ENCODE measurements at regions of chr12 and their contacts with region 1.

Region 1: DNA sequence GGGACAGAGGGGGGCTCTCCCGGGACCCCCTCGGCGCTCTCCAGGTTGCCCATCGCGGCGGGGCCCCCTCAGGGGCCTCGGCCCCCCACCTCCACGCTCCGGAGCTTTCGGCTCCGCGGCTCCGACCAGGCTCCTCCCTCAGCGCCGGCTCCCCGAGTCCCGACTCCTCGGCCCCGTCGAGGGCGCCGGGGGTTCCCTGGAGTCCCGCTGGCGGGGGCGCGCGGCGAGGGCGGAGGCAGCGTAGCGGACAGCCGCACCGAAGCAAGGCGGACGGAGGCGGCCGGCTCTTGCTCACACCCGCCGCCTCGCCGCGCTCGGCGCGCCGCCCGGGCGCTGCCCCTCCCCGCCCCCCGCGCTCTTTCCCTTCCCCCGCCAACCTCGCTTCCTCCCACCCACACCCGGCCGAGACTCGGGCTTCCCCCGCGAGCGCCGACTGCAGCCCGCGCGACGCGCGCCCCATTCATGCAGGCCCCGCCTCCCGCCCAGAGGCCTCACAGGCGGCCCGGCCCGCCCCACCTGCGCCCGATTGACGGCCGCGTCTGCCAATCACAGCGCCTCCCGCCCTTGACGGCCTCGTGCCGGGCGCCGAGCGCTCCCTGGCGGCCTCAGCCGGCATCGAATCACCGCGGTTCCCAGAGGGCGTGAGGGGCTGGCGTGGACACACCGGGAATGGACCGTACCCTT is at the start of gene FMNL3:
- DNase-seq: peak; percentile 97
- ATAC-seq: peak; percentile 86
- H3K4me3 Mint-ChIP-seq: peak within 1 kb of the TSS; percentile 89
- H3K27ac Mint-ChIP-seq: no peak within 1 kb of the TSS
- H3K4me1 Mint-ChIP-seq: peaks cover 38% of the 10 kb centered on the region
- H3K27me3 Mint-ChIP-seq: peaks cover 45% of the 10 kb centered on the region
- CTCF ChIP-seq: peak; percentile 74
- total RNA-seq, gene FMNL3: 15.2 to 19.3 TPM (median 15.6 TPM) in 3 replicates

Region 2: DNA sequence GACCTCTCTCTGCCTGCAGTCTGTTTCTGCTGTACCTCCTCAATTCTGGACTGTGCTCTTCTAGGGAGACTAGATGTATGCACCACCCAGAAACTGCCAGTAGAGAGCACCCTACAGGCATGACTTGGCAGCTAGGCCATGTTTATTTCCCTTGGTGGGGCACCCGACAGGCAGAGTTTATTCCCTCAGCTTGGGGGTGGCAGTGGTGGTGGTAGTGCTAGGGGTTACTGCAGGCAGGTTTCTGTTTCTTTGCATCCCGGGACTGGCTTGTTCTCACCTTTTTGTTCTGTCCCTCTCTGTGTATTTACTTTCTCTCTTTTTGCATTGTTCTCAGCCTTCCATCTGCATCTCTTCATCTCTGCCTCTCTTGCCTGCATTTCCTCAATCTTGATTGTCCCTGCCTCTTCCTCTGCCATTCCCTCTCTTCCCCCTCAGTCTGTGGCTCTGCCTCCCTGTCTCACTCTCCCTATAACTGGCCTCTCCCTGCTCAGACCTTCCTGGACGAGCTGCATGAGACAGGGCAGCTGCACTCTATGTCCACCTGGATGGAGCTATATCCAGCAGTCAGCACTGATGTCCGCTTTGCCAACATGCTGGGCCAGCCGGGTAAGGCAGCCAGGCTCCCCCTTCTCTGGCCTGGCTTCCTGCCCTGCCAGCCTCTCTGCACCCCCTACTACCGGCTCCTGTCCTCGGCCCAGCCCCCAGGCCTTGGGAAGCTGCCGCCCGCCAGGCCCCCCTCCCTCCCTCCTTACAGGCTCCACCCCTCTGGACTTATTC is 70.1 kb before region 1 on chr12:
- CTCF ChIA-PET with region 1: interaction called, 33 read pairs
- POLR2A ChIA-PET with region 1: interaction called, 3 read pairs
- DNase-seq: peak; percentile 63
- ATAC-seq: peak; percentile 86
- H3K4me3 Mint-ChIP-seq: peak overlapping the region; percentile 15; the same call in 1 of the 2 replicates
- H3K27ac Mint-ChIP-seq: peak overlapping the region; percentile 96
- H3K4me1 Mint-ChIP-seq: peaks cover 21% of the 10 kb centered on the region
- H3K27me3 Mint-ChIP-seq: no peaks in the 10 kb centered on the region
- CTCF ChIP-seq: 0 out of 2 replicates have a peak, but pooled peaks have one; percentile 23

Region 3: GRCh38 chr12:49644620-49644994 is 62.7 kb before region 1 on chr12:
- CTCF ChIA-PET with region 1: interaction called, 33 read pairs
- POLR2A ChIA-PET with region 1: interaction called, 4 read pairs
- DNase-seq: peak; percentile 80
- ATAC-seq: peak; percentile 75
- H3K4me3 Mint-ChIP-seq: no peak overlapping the region
- H3K27ac Mint-ChIP-seq: peak overlapping the region; percentile 14; the same call in 1 of the 2 replicates
- H3K4me1 Mint-ChIP-seq: peaks cover 16% of the 10 kb centered on the region
- H3K27me3 Mint-ChIP-seq: no peaks in the 10 kb centered on the region
- CTCF ChIP-seq: peak; percentile 85

Region 4: GRCh38 chr12:49673446-49674317 is 33.6 kb before region 1 on chr12:
- CTCF ChIA-PET with region 1: interaction called, 29 read pairs
- POLR2A ChIA-PET with region 1: interaction called, 5 read pairs
- DNase-seq: peak; percentile 66
- ATAC-seq: peak; percentile 93
- H3K4me3 Mint-ChIP-seq: no peak overlapping the region
- H3K27ac Mint-ChIP-seq: peak overlapping the region; percentile 97
- H3K4me1 Mint-ChIP-seq: peaks cover 30% of the 10 kb centered on the region
- H3K27me3 Mint-ChIP-seq: no peaks in the 10 kb centered on the region
- CTCF ChIP-seq: no peak

Region 5: GRCh38 chr12:49783917-49784676 is 76.8 kb after region 1 on chr12:
- CTCF ChIA-PET with region 1: no interaction called
- POLR2A ChIA-PET with region 1: no interaction called
- DNase-seq: no peak
- ATAC-seq: no peak
- H3K4me3 Mint-ChIP-seq: no peak overlapping the region
- H3K27ac Mint-ChIP-seq: no peak overlapping the region
- H3K4me1 Mint-ChIP-seq: no peaks in the 10 kb centered on the region
- H3K27me3 Mint-ChIP-seq: peaks cover 18% of the 10 kb centered on the region
- CTCF ChIP-seq: no peak